Natural killer cell (primary cell): ENCODE measurements at regions of chr2 and their contacts with region 1.

Region 1: GRCh38 chr2:31333527-31334183 is 80.9 kb downstream of the XDH start:
- DNase-seq: peak; percentile 63 to 82
- ATAC-seq: peak; percentile 77 to 94 (median 92)
- H3K4me3 ChIP-seq: no peak overlapping the region
- H3K4me3 Mint-ChIP-seq: no peak overlapping the region
- H3K27ac ChIP-seq: no peak overlapping the region
- H3K27ac Mint-ChIP-seq: no peak overlapping the region
- H3K4me1 ChIP-seq: no peaks in the 10 kb centered on the region
- H3K4me1 Mint-ChIP-seq: no peaks in the 10 kb centered on the region
- H3K27me3 ChIP-seq: no peaks in the 10 kb centered on the region
- H3K27me3 Mint-ChIP-seq: peaks cover 0 to 3% of the 10 kb centered on the region in 2 donors
- CTCF ChIP-seq: peak; percentile 93

Region 2: DNA sequence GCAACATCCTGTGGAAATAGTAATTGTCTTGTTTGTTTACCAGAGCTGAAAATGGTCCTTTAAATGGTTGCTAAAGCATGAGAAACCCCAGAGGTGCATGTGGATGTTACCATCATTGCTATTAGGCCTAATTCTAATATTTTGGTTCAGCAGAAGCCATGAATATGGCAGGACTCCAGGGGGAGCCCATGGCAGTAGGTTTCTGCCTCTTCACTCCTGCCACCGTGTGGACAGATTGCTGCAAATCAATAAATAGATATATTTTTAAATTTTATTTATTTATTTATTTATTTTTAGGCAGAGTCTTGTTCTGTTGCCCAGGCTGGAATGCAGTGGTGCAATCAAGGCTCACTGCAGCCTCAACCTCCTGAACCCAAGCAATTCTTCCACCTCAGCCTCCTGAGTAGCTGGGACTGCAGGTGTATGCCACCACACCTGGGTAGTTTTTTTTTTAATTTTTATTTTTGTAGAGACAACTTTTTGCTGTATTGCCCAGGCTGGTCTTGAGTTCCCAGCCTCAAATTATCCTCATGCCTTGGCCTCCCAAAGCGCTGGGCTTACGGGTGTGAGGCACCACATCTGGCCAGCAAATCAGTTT is 471.5 kb before region 1 on chr2:
- intact Hi-C with region 1: loop called (anchors 10 kb)
- DNase-seq: peak in 1 of 2 donors; percentile 69
- ATAC-seq: peak; percentile 42 to 61 (median 47)
- H3K4me3 ChIP-seq: no peak overlapping the region
- H3K4me3 Mint-ChIP-seq: no peak overlapping the region
- H3K27ac ChIP-seq: no peak overlapping the region
- H3K27ac Mint-ChIP-seq: no peak overlapping the region
- H3K4me1 ChIP-seq: no peaks in the 10 kb centered on the region
- H3K4me1 Mint-ChIP-seq: peaks cover 0 to 3% of the 10 kb centered on the region in 2 donors
- H3K27me3 ChIP-seq: no peaks in the 10 kb centered on the region
- H3K27me3 Mint-ChIP-seq: peaks cover 0 to 7% of the 10 kb centered on the region in 2 donors
- CTCF ChIP-seq: peak; percentile 50

Region 3: GRCh38 chr2:31170071-31170698 is 163.5 kb before region 1 on chr2:
- intact Hi-C with region 1: loop called (anchors 2 kb)
- DNase-seq: peak; percentile 24 to 72
- ATAC-seq: peak; percentile 61 to 95 (median 76)
- H3K4me3 ChIP-seq: no peak overlapping the region
- H3K4me3 Mint-ChIP-seq: no peak overlapping the region
- H3K27ac ChIP-seq: no peak overlapping the region
- H3K27ac Mint-ChIP-seq: no peak overlapping the region
- H3K4me1 ChIP-seq: no peaks in the 10 kb centered on the region
- H3K4me1 Mint-ChIP-seq: peaks cover under 1% of the 10 kb centered on the region in 2 donors
- H3K27me3 ChIP-seq: no peaks in the 10 kb centered on the region
- H3K27me3 Mint-ChIP-seq: peaks cover 7 to 8% of the 10 kb centered on the region in 2 donors
- CTCF ChIP-seq: peak; percentile 73

Region 4: DNA sequence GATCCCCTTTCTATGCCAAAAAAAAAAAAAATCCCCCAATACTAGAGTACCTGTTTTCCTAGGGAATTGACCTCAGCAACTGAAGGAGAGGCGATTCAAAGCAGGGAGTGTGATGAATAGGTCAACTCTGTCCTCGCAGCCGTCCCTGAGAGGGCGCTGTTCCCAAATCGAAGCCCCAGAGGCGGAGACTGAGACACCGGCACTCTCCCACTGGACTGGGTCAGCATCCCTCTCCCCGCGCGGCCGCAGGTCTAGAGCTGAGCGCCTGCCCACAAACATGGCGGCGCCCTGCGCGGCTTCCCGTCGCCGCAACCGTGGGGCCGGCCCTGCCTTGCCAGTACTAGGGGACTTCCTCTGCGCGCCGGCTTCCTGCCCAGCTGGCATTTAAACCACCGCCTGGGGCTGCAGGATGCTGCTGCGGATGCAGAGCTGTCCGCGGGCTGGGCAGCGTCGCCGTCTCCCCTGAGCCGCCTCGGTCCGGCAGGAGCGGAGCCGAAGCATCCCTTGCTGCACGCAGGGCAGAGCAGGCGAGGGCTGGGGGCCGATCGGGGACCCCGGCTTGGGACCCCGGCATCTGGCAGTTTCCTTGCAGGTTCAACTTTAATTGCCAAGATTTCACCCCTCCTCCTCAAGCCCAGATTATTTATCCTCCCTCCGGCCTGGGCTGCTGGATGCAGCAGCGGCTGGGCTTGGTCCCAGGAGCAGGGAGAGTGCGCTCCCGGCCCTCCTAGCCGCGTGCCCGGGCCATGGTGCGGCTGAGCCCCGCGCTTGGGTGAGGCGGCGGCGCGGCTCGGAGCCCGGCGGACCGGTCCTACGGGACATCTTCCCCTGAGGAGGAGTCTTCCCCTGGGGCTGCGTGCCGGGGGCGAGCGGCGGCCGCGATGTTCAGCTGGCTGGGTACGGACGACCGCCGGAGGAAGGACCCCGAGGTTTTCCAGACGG is 99.6 kb before region 1 on chr2 and contains the start of gene EHD3:
- intact Hi-C with region 1: loop called (anchors 10 kb)
- DNase-seq: peak; percentile 67 to 83
- ATAC-seq: peak; percentile 94 to 97 (median 96)
- H3K4me3 ChIP-seq: peak within 1 kb of the TSS; percentile 51
- H3K4me3 Mint-ChIP-seq: peak within 1 kb of the TSS; percentile 83
- H3K27ac ChIP-seq: no peak within 1 kb of the TSS
- H3K27ac Mint-ChIP-seq: peak within 1 kb of the TSS in 1 of 2 donors; percentile 67
- H3K4me1 ChIP-seq: peaks cover 11% of the 10 kb centered on the region
- H3K4me1 Mint-ChIP-seq: peaks cover 16 to 38% of the 10 kb centered on the region in 2 donors
- H3K27me3 ChIP-seq: no peaks in the 10 kb centered on the region
- H3K27me3 Mint-ChIP-seq: peaks cover 0 to under 1% of the 10 kb centered on the region in 2 donors
- CTCF ChIP-seq: no peak
- total RNA-seq, gene EHD3: 5.6 to 7.8 (median 7.2) TPM